Calu3 (cell line): ENCODE measurements at regions of chr10 and their contacts with region 1.

Region 1: DNA sequence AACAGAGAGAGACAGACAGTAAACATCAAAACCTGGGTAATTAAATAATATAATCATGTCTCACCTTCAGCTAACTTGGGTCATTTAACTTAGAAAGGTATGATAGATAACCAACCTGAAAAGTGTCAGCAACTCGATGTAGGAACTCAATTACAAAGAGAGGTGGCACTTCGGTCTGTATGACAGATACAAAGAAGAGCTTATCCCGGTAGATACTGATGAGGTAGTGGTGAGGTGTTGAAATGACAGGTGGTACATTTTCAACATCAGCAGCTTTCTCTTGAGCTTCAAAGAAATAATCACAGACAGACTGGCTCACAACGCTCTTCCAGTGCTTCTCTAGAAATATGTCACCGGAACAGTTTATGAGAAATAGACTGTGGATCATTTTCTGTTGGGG is 12.6 kb downstream of the AP3M1 start:
- DNase-seq: no peak
- H3K4me3 Mint-ChIP-seq: no peak overlapping the region
- H3K27ac Mint-ChIP-seq: no peak overlapping the region
- H3K4me1 Mint-ChIP-seq: no peaks in the 10 kb centered on the region
- H3K27me3 Mint-ChIP-seq: no peaks in the 10 kb centered on the region
- CTCF ChIP-seq: no peak

Region 2: DNA sequence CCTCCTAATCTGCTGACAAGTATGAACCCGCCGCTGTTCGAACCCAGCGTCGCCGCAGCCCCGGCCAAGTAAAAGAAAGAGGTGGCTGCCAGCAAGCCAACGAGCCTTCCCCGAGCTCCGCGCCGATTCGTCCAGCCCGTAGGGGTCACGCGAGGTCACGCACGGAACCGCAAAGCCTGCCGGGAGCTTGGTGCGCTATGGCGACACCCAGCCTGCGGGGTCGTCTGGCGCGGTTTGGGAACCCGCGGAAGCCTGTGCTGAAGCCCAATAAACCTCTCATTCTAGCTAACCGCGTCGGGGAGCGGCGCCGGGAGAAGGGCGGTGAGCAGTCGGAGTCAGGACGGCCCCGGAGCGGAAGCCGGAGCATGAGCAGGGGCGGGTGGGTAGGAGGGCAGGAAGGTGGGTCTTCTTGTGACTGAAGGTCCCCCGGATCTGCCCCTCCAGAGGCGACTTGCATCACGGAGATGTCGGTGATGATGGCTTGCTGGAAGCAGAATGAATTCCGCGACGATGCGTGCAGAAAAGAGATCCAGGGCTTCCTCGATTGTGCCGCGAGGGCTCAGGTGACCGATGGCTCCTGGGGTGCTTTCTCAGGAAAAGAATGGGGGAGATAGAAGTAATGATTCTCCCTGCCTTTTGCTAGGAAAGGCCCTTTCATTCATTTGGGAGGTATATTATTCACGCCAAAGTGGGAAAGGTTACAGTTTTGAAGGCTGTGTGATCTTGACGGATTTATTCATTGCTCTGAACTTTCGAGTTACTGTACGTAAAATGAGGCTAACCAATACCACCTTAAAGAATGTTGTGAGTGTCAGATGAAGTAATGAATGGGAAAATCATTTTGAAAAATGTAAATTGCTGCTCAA is 355.9 kb before region 1 on chr10 and contains the start of gene CHCHD1:
- CTCF ChIA-PET with region 1: interaction called, 16 read pairs
- intact Hi-C with region 1: no loop called
- DNase-seq: peak; percentile 97
- H3K4me3 Mint-ChIP-seq: peak within 1 kb of the TSS; percentile 93
- H3K27ac Mint-ChIP-seq: peak within 1 kb of the TSS; percentile 92
- H3K4me1 Mint-ChIP-seq: peaks cover 36% of the 10 kb centered on the region
- H3K27me3 Mint-ChIP-seq: no peaks in the 10 kb centered on the region
- CTCF ChIP-seq: no peak
- total RNA-seq, gene CHCHD1: 39.2 and 44.1 TPM in 2 replicates